ENCODE measurements at regions of chr14 and their contacts with region 1.

Region 1: DNA sequence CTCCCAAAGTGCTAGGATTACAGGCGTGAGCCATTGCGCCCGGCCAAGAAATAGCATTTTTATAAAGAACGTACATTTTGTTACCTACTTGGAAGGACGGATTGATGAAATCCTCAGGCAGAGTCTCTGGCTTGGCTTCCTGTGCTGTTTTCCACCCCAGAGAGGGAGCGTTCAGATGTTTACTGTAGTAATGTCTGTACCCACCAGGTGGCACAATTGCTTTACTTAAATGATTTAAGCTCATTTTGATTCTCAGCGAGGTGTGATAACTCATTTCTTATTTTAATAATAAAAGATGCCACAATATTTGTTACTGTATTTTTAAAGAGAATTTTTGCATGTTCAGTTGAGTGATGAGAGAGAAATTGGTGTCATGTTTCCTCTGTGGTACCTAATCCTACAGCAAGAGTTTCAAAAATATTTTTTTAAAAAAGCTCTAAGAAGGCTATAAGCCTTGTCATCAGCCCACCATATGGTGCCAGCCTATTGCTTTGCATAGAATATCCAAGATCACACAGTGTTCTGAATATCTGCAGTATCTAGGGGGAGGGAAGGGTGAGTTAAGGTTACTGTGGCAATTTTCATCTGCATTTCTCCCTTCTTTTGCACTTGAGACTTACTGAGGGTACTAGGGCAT is 82.6 kb upstream of the TRAF3 start:
- DNase-seq: no peak
- H3K4me3 ChIP-seq: no peak overlapping the region
- CTCF ChIP-seq: peak; percentile 50

Region 2: DNA sequence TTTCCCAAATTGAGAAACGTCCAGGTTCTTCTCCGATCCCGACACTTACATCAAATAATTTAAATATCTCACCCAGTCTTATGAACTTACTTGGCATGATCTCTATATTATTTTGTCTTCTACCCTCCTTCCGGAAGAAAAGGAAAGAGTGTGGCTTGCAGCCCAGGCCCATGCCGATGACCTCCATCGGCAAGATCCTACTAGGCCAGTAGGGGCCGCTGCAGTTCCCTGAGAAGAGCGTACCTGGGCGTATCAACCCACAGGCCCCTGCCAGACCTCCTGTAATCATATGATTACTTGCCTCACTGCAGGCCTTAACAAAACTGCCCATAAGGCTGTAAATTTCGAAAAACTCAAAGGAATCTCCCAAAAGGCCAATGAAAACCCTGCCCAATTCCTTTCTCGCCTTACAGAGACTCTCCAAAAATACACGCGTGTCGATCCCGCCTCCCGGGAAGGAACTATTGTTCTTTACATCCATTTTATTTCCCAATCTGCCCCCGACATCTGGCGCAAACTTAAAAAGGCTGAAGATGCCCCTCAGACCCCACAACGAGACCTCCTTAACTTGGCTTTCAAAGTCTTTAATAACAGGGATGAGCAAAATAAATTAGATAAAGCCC is 459.3 kb before region 1 on chr14:
- CTCF ChIA-PET with region 1: no interaction called
- POLR2A ChIA-PET with region 1: no interaction called
- DNase-seq: peak; percentile 34
- H3K4me3 ChIP-seq: peak overlapping the region; percentile 23
- CTCF ChIP-seq: peak; percentile 83

Region 3: DNA sequence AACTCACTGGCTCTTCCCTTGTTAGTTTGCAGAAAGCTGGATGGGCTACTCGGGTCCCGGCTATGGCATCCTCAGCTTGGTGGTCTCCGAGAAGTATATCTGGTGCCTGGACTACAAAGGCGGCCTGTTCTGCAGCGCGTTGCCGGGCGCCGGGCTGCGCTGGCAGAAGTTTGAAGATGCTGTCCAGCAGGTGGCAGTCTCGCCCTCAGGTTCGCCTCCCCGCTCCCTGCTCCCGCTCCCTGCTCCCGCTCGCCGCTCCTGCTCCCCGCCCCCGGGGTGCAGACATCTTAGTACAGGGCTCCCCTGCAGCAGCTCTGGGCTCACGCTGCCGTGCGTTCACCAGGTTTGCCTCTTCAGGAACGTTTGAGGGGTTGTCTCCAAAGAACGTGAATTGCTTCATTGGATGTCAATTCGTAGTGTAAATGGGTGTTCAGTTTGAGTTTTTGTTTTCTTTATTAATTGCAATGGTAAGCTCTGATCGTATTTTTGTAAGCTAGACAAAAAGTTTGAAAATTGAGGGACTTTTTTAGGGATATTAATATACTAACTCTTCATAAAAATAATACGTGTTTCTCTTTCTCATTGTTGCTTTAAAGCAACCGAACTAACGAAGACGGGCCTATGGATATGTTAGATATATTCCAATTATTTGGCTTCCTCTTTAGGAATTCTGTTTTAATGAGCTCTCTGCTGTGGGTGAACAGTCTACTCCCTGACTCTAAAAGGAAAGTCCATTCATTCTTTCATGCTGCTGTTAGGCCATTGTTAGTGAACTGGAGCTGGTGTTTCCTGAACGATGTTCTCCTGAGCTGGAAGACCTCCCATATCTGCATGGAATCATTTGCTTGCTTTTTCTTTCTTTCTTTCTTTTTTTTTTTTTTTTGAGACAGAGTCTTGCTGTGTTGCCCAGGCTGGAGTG is 256.4 kb before region 1 on chr14:
- CTCF ChIA-PET with region 1: interaction called, 17 read pairs
- POLR2A ChIA-PET with region 1: no interaction called
- DNase-seq: no peak
- H3K4me3 ChIP-seq: peak overlapping the region; percentile 32; the same call in 1 of the 2 replicates
- CTCF ChIP-seq: peak; percentile 89

Region 4: GRCh38 chr14:102516531-102517415 is 177.9 kb before region 1 on chr14:
- CTCF ChIA-PET with region 1: no interaction called
- POLR2A ChIA-PET with region 1: no interaction called
- DNase-seq: no peak
- H3K4me3 ChIP-seq: peak overlapping the region; percentile 63
- CTCF ChIP-seq: peak; percentile 60

Region 5: GRCh38 chr14:102683399-102684297 is 11.0 kb before region 1 on chr14:
- CTCF ChIA-PET with region 1: interaction called, 22 read pairs
- POLR2A ChIA-PET with region 1: no interaction called
- DNase-seq: no peak
- H3K4me3 ChIP-seq: no peak overlapping the region
- CTCF ChIP-seq: no peak

Region 6: DNA sequence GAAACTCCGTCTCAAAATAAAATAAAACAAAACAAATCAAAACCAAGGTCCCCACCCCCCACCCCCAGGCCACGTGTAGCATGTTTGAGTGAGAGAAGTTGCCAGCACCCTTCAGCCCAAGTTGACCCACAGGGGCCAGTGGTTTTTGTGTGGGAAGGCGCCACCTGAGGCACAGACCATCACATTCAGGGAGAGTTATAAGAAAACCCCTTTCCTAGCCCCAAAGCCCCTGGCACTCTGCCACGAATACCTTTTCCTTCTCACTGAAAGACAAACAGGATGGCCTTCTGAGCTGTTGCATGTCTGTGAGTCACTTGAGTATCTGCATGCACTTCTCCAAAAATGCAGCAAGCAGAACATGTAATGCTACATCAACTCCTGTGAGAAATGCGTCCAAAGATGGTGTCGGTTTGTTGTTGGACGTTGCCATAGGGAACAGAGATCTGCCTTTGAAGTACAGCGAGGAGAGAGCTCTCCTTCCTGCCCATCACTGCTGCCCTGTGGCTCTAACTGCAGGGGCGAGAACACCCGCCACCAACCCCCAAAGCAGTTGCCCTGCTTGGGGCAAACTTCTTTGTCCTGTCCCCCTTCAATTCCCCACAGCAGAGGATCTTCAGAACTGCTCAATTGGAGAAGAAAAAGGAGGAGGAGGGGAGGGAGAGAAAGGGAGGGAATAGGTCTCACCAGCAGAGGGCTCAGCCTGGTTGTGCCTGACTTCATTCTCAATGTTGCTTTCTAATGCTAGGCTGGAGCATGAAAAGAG is 79.9 kb after region 1 on chr14:
- CTCF ChIA-PET with region 1: interaction called, 27 read pairs
- POLR2A ChIA-PET with region 1: no interaction called
- DNase-seq: no peak
- H3K4me3 ChIP-seq: no peak overlapping the region
- CTCF ChIP-seq: peak; percentile 91

Region 7: GRCh38 chr14:102785584-102785942 is 90.9 kb after region 1 on chr14:
- CTCF ChIA-PET with region 1: no interaction called
- POLR2A ChIA-PET with region 1: no interaction called
- DNase-seq: no peak
- H3K4me3 ChIP-seq: no peak overlapping the region
- CTCF ChIP-seq: no peak

Region 8: GRCh38 chr14:102937331-102938175 is 242.9 kb after region 1 on chr14:
- CTCF ChIA-PET with region 1: interaction called, 10 read pairs
- POLR2A ChIA-PET with region 1: no interaction called
- DNase-seq: no peak
- H3K4me3 ChIP-seq: no peak overlapping the region
- CTCF ChIP-seq: no peak

Region 9: DNA sequence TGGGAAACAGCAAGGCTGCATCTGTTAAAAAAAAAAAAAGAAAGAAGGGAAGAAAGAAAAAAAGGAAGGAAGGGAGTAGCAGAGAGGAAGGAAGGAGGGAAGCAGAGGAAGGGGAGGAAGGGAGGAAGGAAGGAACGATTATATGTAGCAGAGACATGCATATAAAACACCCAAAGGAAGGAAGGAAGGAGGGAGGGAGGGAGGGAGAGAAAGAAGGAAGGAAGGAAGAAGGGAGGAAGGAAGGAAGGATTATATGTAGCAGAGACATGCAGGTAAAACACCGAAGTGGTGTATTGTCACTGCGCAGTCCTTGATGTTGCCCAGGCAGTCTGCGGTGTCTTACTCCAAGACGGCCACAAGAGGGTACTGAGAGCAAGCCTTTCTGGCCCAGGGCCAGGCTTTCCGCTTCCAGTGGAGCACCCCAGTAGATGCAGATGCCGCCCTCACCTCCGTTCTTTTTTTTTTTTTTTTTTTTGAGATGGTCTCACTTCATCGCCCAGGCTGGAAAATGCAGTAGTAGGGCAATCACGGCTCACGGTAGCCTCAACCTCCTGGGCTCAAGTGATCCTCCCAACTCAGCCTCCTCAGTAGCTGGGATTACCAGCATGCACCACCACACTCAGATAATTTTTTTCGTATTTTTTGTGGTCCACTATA is 383.6 kb after region 1 on chr14:
- CTCF ChIA-PET with region 1: interaction called, 12 read pairs
- POLR2A ChIA-PET with region 1: no interaction called
- DNase-seq: no peak
- H3K4me3 ChIP-seq: no peak overlapping the region
- CTCF ChIP-seq: peak; percentile 84

Measured in AG04449 (cell line).